Psoas muscle (tissue), 8 donors: ENCODE measurements at regions of chr4 and their contacts with region 1.

Region 1: GRCh38 chr4:86927843-86928395 is 6.9 kb upstream of the AFF1 start:
- DNase-seq: peak in 1 of 2 donors; percentile 60
- ATAC-seq: peak; percentile 91 to 97 (median 94)
- H3K4me3 ChIP-seq: no peak overlapping the region
- H3K27ac ChIP-seq: peak overlapping the region; percentile 84
- H3K4me1 ChIP-seq: peaks cover 17% of the 10 kb centered on the region
- H3K27me3 ChIP-seq: no peaks in the 10 kb centered on the region
- CTCF ChIP-seq: no peak

Region 2: GRCh38 chr4:85543832-85544231 is 1384.1 kb before region 1 on chr4:
- intact Hi-C with region 1: no loop called
- DNase-seq: no peak
- ATAC-seq: no peak
- H3K4me3 ChIP-seq: no peak overlapping the region
- H3K27ac ChIP-seq: no peak overlapping the region
- H3K4me1 ChIP-seq: no peaks in the 10 kb centered on the region
- H3K27me3 ChIP-seq: no peaks in the 10 kb centered on the region
- CTCF ChIP-seq: no peak

Region 3: GRCh38 chr4:87058356-87059073 is 130.6 kb after region 1 on chr4:
- intact Hi-C with region 1: no loop called
- DNase-seq: no peak
- ATAC-seq: peak; percentile 53 to 70 (median 65)
- H3K4me3 ChIP-seq: peak overlapping the region; percentile 14
- H3K27ac ChIP-seq: peak overlapping the region; percentile 87
- H3K4me1 ChIP-seq: peaks cover 86% of the 10 kb centered on the region
- H3K27me3 ChIP-seq: no peaks in the 10 kb centered on the region
- CTCF ChIP-seq: peak; percentile 26

Region 4: DNA sequence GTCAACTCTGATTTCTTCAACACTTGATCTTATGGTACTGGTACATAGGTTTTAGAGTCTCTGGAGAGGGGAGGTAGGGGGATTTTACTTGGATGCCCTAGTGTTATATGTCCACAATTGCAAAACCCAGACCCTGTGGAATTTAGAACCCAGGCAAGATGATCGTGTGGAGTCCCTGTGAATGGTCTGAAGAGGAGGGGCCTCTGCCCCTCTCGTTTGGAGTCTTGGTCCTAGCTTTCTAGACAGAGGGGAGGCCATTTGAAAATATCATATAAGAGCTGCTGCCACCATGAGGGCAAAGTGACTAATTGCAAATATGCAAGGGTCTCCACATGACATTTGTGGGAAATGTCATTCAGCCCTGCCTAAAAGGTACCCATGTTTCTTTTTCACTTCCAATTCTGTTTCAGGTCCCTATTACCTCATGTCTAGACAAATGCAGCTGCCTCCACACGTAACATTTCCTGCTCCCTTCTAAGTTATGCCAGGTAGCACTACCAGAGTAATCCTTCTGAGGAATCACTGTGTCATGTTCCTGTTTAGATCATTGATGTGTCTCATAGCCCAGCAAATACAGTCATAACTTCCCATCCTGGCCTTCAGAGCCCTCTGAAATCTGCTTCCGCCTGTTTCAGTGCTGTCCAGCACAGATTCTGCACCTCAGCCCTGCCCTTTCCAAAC is 165.7 kb after region 1 on chr4:
- intact Hi-C with region 1: loop called (anchors 2 to 5 kb)
- DNase-seq: no peak
- ATAC-seq: peak; percentile 74 to 86 (median 74)
- H3K4me3 ChIP-seq: no peak overlapping the region
- H3K27ac ChIP-seq: peak overlapping the region; percentile 81
- H3K4me1 ChIP-seq: peaks cover 32% of the 10 kb centered on the region
- H3K27me3 ChIP-seq: no peaks in the 10 kb centered on the region
- CTCF ChIP-seq: peak; percentile 62

Region 5: GRCh38 chr4:87108142-87108546 is 180.2 kb after region 1 on chr4:
- intact Hi-C with region 1: loop called in 1 of 2 experiments (anchors 5 kb)
- DNase-seq: peak; percentile 53 to 80
- ATAC-seq: peak; percentile 97 to 99 (median 98)
- H3K4me3 ChIP-seq: peak overlapping the region; percentile 51
- H3K27ac ChIP-seq: peak overlapping the region; percentile 86
- H3K4me1 ChIP-seq: peaks cover 68% of the 10 kb centered on the region
- H3K27me3 ChIP-seq: no peaks in the 10 kb centered on the region
- CTCF ChIP-seq: no peak

Region 6: DNA sequence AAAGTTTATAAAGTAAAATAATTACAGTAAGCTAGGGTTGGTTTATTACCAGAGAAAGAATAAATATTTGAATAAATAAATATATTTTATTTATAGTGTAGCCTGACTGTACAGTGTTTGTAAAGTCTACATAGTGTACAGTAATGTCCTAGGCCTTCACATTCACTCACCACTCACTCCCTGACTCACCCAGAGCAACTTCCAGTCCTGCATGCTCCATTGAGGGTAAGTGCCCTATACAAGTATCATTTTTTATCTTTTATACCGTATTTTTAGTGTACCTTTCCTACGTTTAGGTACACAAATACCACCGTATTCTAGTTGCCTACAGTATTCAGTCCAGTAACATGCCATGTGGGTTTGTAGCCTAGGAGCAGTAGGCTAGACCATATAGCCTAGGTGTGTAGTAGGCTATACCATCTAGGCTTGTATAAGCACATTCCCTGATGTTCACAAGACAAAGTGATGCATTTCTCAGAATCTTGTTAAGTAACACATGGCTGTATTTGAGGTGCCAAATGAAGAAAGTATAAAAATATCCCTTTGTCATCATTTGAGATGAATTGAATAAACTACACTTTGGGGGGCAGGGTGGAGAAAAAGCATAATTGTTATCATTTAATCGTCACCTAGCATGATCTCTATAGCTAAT is 307.2 kb after region 1 on chr4:
- intact Hi-C with region 1: loop called (anchors 5 kb)
- DNase-seq: no peak
- ATAC-seq: peak in 1 of 4 donors; percentile 49
- H3K4me3 ChIP-seq: peak overlapping the region; percentile 66
- H3K27ac ChIP-seq: no peak overlapping the region
- H3K4me1 ChIP-seq: no peaks in the 10 kb centered on the region
- H3K27me3 ChIP-seq: no peaks in the 10 kb centered on the region
- CTCF ChIP-seq: no peak